GM23248 (cell line): ENCODE measurements at regions of chr18 and their contacts with region 1.

Region 1: DNA sequence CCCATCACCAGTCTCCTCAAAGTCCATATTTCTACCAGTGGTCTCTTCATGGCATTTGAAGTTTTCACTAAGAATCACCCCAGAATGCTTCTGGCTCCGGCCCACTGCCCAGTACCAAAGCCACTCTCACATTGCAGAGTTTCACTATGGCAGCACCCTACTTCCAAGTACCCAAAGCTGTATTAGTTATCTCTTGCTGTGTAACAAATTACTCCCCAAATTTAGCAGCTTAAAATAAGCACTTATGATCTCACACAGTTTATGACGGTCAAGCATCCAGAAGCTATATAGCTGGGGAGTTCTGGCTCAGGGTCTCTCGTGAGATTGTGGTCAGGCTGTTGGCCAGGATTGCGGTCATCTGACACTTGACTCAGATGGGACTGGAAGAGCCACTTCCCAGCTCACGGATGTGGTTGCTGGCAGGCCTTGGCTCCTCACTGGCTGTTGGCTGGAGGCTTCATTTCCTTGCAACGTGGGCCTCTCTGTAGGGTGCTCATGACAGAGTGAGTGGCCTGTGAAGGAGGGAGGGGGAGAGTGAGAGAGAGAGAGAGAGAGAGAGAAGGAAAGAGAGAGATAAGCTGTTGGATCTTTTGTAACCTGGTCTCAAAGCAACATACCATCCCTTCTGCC is 189.5 kb downstream of the CTIF start:
- DNase-seq: peak; percentile 97
- H3K4me3 ChIP-seq: no peak overlapping the region
- H3K27ac ChIP-seq: peak overlapping the region; percentile 95
- H3K4me1 ChIP-seq: peaks cover 29% of the 10 kb centered on the region
- H3K27me3 ChIP-seq: no peaks in the 10 kb centered on the region

Region 2: GRCh38 chr18:48928787-48929186 is 200.5 kb after region 1 on chr18:
- in situ Hi-C with region 1: loop called (anchors 25 kb)
- DNase-seq: peak; percentile 75
- H3K4me3 ChIP-seq: peak overlapping the region; percentile 18
- H3K27ac ChIP-seq: peak overlapping the region; percentile 87
- H3K4me1 ChIP-seq: peaks cover 78% of the 10 kb centered on the region
- H3K27me3 ChIP-seq: no peaks in the 10 kb centered on the region

Region 3: GRCh38 chr18:48955830-48956261 is 227.5 kb after region 1 on chr18:
- in situ Hi-C with region 1: no loop called
- DNase-seq: peak; percentile 97
- H3K4me3 ChIP-seq: peak overlapping the region; percentile 43
- H3K27ac ChIP-seq: peak overlapping the region; percentile 96
- H3K4me1 ChIP-seq: peaks cover 60% of the 10 kb centered on the region
- H3K27me3 ChIP-seq: no peaks in the 10 kb centered on the region